ENCODE measurements at regions of chr1 and their contacts with region 1.

Region 1: GRCh38 chr1:91854852-91855534 is 31.0 kb downstream of the TGFBR3 start:
- DNase-seq: no peak
- ATAC-seq: no peak
- H3K4me3 ChIP-seq: no peak overlapping the region
- H3K4me3 Mint-ChIP-seq: no peak overlapping the region
- H3K27ac ChIP-seq: no peak overlapping the region
- H3K27ac Mint-ChIP-seq: no peak overlapping the region
- H3K4me1 ChIP-seq: no peaks in the 10 kb centered on the region
- H3K4me1 Mint-ChIP-seq: peaks cover 0 to 13% (median 0%) of the 10 kb centered on the region in 7 donors
- H3K27me3 ChIP-seq: no peaks in the 10 kb centered on the region
- H3K27me3 Mint-ChIP-seq: peaks cover 0 to 2% (median 0%) of the 10 kb centered on the region in 5 donors

Region 2: GRCh38 chr1:91835087-91835521 is 19.9 kb before region 1 on chr1:
- CTCF ChIA-PET with region 1: no interaction called
- POLR2A ChIA-PET with region 1: no interaction called
- intact Hi-C with region 1: loop called in 1 of 2 experiments (anchors 1 kb)
- DNase-seq: no peak
- ATAC-seq: no peak
- H3K4me3 ChIP-seq: no peak overlapping the region
- H3K4me3 Mint-ChIP-seq: no peak overlapping the region
- H3K27ac ChIP-seq: no peak overlapping the region
- H3K27ac Mint-ChIP-seq: no peak overlapping the region
- H3K4me1 ChIP-seq: peaks cover 0 to 5% of the 10 kb centered on the region in 2 donors
- H3K4me1 Mint-ChIP-seq: peaks cover 4 to 26% (median 14%) of the 10 kb centered on the region in 7 donors
- H3K27me3 ChIP-seq: no peaks in the 10 kb centered on the region
- H3K27me3 Mint-ChIP-seq: peaks cover 0 to 16% (median 0%) of the 10 kb centered on the region in 5 donors

Region 3: DNA sequence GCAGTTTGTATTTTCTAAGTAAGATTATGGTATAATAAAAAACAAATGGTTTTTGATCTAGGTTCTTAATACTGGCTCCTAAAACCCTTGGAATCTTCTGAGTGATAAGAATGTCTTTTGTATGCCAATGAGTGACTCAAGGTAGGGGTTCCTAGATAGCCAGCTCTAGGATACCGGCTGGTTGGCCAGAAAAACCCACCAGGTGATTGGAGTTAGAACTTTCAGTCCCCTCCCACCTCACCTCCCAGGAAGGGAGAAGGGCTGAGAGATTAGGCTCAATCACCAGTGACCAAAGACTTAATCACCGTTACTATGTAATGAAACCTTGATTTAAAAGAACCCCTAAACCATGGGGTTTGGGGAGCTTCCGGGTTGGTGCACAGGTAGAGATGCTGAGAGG is 85.5 kb after region 1 on chr1:
- CTCF ChIA-PET with region 1: no interaction called
- POLR2A ChIA-PET with region 1: no interaction called
- intact Hi-C with region 1: no loop called
- DNase-seq: no peak
- ATAC-seq: no peak
- H3K4me3 ChIP-seq: no peak overlapping the region
- H3K4me3 Mint-ChIP-seq: no peak overlapping the region
- H3K27ac ChIP-seq: no peak overlapping the region
- H3K27ac Mint-ChIP-seq: no peak overlapping the region
- H3K4me1 ChIP-seq: no peaks in the 10 kb centered on the region
- H3K4me1 Mint-ChIP-seq: no peaks in the 10 kb centered on the region
- H3K27me3 ChIP-seq: no peaks in the 10 kb centered on the region
- H3K27me3 Mint-ChIP-seq: no peaks in the 10 kb centered on the region

Region 4: GRCh38 chr1:92464588-92465255 is 609.7 kb after region 1 on chr1:
- CTCF ChIA-PET with region 1: no interaction called
- POLR2A ChIA-PET with region 1: no interaction called
- intact Hi-C with region 1: no loop called
- DNase-seq: no peak
- ATAC-seq: peak; percentile 46
- H3K4me3 ChIP-seq: no peak overlapping the region
- H3K4me3 Mint-ChIP-seq: peak overlapping the region in 8 of 10 donors; percentile 4 to 60 (median 42)
- H3K27ac ChIP-seq: no peak overlapping the region
- H3K27ac Mint-ChIP-seq: peak overlapping the region in 4 of 9 donors; percentile 32 to 89 (median 70)
- H3K4me1 ChIP-seq: peaks cover 22 to 23% of the 10 kb centered on the region in 2 donors
- H3K4me1 Mint-ChIP-seq: peaks cover 30 to 69% (median 62%) of the 10 kb centered on the region in 7 donors
- H3K27me3 ChIP-seq: no peaks in the 10 kb centered on the region
- H3K27me3 Mint-ChIP-seq: no peaks in the 10 kb centered on the region

Measured in naive thymus-derived CD4-positive, alpha-beta T cell (primary cell).